ENCODE measurements at regions of chr2 and their contacts with region 1.

Region 1: GRCh38 chr2:233084488-233084887 is 24.3 kb downstream of the INPP5D start:
- DNase-seq: peak in 7 of 9 donors; percentile 32 to 66 (median 55)
- ATAC-seq: peak; percentile 64
- H3K4me3 ChIP-seq: peak overlapping the region; percentile 27
- H3K4me3 Mint-ChIP-seq: peak overlapping the region; percentile 79 to 86 (median 82)
- H3K27ac ChIP-seq: peak overlapping the region; percentile 57
- H3K27ac Mint-ChIP-seq: peak overlapping the region in 8 of 9 donors; percentile 88 to 98 (median 93)
- H3K4me1 ChIP-seq: peaks cover 64 to 82% of the 10 kb centered on the region in 2 donors
- H3K4me1 Mint-ChIP-seq: peaks cover 74 to 93% (median 88%) of the 10 kb centered on the region in 7 donors
- H3K27me3 ChIP-seq: no peaks in the 10 kb centered on the region
- H3K27me3 Mint-ChIP-seq: no peaks in the 10 kb centered on the region

Region 2: DNA sequence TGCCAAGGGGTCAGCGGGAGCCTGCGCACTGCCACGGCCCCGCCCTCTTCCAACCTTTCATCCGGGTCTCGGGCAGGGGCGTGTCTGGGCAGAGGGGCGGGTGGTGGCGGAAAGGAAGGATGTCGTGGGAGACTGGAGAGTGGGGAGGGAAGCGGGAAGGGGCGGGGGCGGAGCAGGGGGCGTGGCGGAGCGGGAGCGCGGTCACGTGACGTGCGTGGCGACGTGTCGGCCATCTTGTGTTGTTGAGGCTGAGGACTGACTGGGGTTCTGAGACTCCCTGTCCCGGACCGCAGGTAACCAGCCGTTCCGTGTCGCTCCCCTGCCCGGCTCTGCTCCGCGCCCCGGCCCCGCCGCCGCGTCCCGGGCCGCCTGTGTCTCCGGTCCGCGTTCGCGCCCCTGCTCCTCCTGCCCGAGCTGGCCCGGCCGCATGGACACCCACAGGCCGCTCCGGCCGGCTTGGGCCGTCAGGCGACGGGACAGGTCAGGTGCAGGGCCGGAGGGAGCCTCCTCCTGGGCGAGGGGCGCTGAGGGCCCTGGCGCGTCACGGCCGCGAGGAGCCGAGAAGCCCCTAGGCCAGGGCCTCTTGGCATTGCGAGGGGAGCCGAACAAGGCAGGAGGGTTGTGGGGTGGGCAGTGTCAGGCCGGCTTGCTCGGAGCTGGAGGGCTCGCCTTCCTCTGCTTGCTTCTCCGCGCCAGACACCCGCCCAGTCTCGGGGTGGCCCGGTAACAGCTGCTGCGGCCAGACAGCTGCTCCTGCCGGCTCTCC is 387.2 kb before region 1 on chr2 and contains the start of gene GIGYF2:
- CTCF ChIA-PET with region 1: no interaction called
- POLR2A ChIA-PET with region 1: no interaction called
- intact Hi-C with region 1: loop called (anchors 5 to 10 kb)
- DNase-seq: peak; percentile 73 to 94 (median 84)
- ATAC-seq: peak; percentile 95
- H3K4me3 ChIP-seq: peak within 1 kb of the TSS; percentile 94
- H3K4me3 Mint-ChIP-seq: peak within 1 kb of the TSS; percentile 88 to 98 (median 93)
- H3K27ac ChIP-seq: peak within 1 kb of the TSS; percentile 96
- H3K27ac Mint-ChIP-seq: peak within 1 kb of the TSS; percentile 82 to 96 (median 87)
- H3K4me1 ChIP-seq: peaks cover 35 to 37% of the 10 kb centered on the region in 2 donors
- H3K4me1 Mint-ChIP-seq: peaks cover 22 to 40% (median 35%) of the 10 kb centered on the region in 7 donors
- H3K27me3 ChIP-seq: no peaks in the 10 kb centered on the region
- H3K27me3 Mint-ChIP-seq: peaks cover 0 to 10% (median 0%) of the 10 kb centered on the region in 5 donors
- total RNA-seq, gene GIGYF2: 70.7 to 82.8 (median 79.8) TPM

Region 3: GRCh38 chr2:233061591-233062450 is 22.7 kb before region 1 on chr2:
- CTCF ChIA-PET with region 1: interaction called, 20 read pairs
- POLR2A ChIA-PET with region 1: interaction called, 144 read pairs
- intact Hi-C with region 1: loop called (anchors 1 kb)
- DNase-seq: peak in 1 of 9 donors; percentile 41
- ATAC-seq: peak; percentile 32
- H3K4me3 ChIP-seq: peak overlapping the region; percentile 88
- H3K4me3 Mint-ChIP-seq: peak overlapping the region; percentile 86 to 98 (median 96)
- H3K27ac ChIP-seq: peak overlapping the region; percentile 85
- H3K27ac Mint-ChIP-seq: peak overlapping the region; percentile 90 to 99 (median 95)
- H3K4me1 ChIP-seq: peaks cover 33 to 41% of the 10 kb centered on the region in 2 donors
- H3K4me1 Mint-ChIP-seq: peaks cover 35 to 60% (median 48%) of the 10 kb centered on the region in 7 donors
- H3K27me3 ChIP-seq: no peaks in the 10 kb centered on the region
- H3K27me3 Mint-ChIP-seq: no peaks in the 10 kb centered on the region

Region 4: GRCh38 chr2:233114421-233114861 is 30.0 kb after region 1 on chr2:
- CTCF ChIA-PET with region 1: no interaction called
- POLR2A ChIA-PET with region 1: no interaction called
- intact Hi-C with region 1: loop called in 1 of 2 experiments (anchors 5 kb)
- DNase-seq: peak in 6 of 9 donors; percentile 26 to 47 (median 34)
- ATAC-seq: peak; percentile 67
- H3K4me3 ChIP-seq: no peak overlapping the region
- H3K4me3 Mint-ChIP-seq: peak overlapping the region in 8 of 10 donors; percentile 37 to 75 (median 61)
- H3K27ac ChIP-seq: no peak overlapping the region
- H3K27ac Mint-ChIP-seq: peak overlapping the region in 8 of 9 donors; percentile 15 to 84 (median 72)
- H3K4me1 ChIP-seq: peaks cover 7 to 55% of the 10 kb centered on the region in 2 donors
- H3K4me1 Mint-ChIP-seq: peaks cover 49 to 91% (median 81%) of the 10 kb centered on the region in 7 donors
- H3K27me3 ChIP-seq: no peaks in the 10 kb centered on the region
- H3K27me3 Mint-ChIP-seq: no peaks in the 10 kb centered on the region

Region 5: GRCh38 chr2:233234264-233234663 is 149.8 kb after region 1 on chr2:
- CTCF ChIA-PET with region 1: no interaction called
- POLR2A ChIA-PET with region 1: no interaction called
- intact Hi-C with region 1: loop called in 1 of 2 experiments (anchors 5 kb)
- DNase-seq: peak in 1 of 9 donors; percentile 35
- ATAC-seq: no peak
- H3K4me3 ChIP-seq: no peak overlapping the region
- H3K4me3 Mint-ChIP-seq: peak overlapping the region in 2 of 10 donors; percentile 56 to 72
- H3K27ac ChIP-seq: no peak overlapping the region
- H3K27ac Mint-ChIP-seq: peak overlapping the region in 4 of 9 donors; percentile 14 to 87 (median 46)
- H3K4me1 ChIP-seq: peaks cover 19 to 24% of the 10 kb centered on the region in 2 donors
- H3K4me1 Mint-ChIP-seq: peaks cover 22 to 67% (median 30%) of the 10 kb centered on the region in 7 donors
- H3K27me3 ChIP-seq: no peaks in the 10 kb centered on the region
- H3K27me3 Mint-ChIP-seq: no peaks in the 10 kb centered on the region